CD4-positive, alpha-beta T cell (primary cell): ENCODE measurements at regions of chr3 and their contacts with region 1.

Region 1: DNA sequence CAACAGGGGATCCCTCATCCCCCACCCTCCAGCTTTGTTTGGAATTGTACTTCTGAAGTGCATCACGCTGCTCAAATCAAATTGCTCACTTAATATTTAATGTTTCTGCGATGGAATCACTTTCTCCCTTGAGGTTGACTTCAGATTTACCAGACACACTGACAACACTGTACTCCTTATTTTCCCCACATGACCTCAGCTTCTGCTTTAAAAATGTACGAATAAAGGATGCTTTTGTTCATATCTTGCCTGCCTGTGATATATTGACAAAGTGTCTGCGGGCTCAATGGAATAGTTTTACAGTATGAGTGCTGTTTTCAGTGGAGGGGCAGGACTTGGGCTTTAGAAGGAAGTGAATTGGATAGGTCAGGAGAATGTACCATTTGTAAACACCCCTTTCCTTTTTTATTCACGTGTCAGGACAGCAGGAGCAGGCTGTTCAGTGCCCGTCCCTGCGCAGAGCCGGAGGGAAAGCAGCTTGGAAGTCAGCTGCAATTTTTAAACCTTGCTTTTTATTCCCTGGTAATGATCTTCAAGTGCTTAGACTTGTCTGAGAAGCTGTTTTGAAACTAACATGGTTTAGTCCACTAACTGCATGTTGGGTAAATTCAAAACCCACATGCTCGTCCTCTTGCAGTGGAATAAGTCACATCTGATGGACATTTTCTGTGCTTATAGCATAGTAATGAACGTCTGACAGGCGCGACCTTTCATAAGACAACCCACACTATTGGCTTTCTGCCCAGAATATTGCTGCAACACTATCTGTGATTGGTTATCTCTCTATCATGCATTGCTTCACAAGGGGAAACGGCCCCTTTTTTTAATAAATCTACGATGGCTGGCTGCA is 29.9 kb downstream of the MBNL1 start:
- DNase-seq: peak in 10 of 14 experiments; percentile 22 to 90 (median 54)
- ATAC-seq: peak; percentile 74
- H3K4me3 ChIP-seq: peak overlapping the region; percentile 36
- H3K4me3 Mint-ChIP-seq: peak overlapping the region; percentile 79
- H3K27ac ChIP-seq: peak overlapping the region; percentile 56 to 60
- H3K27ac Mint-ChIP-seq: peak overlapping the region; percentile 92
- H3K4me1 ChIP-seq: peaks cover 55% of the 10 kb centered on the region
- H3K4me1 Mint-ChIP-seq: peaks cover 79% of the 10 kb centered on the region
- H3K27me3 ChIP-seq: no peaks in the 10 kb centered on the region
- H3K27me3 Mint-ChIP-seq: no peaks in the 10 kb centered on the region
- CTCF ChIP-seq: no peak

Region 2: DNA sequence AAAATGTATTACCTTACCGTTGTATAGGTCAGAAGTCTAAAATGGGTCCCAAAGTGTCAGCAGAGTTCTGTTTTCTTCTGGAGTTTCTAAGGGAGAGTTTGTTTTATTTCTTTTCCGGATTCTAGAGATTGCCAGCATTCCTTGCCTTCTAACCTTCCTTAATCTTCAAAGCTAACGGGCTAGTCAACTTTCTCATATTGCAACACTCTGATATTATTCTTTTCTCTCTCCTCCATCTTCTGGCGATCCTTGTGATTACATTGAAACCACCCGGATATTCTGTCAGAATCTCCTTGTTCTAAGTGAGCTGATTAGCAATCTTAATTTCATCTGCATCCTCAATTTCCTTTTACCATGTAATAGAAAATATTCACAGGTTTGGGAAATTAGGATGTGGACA is 601.1 kb before region 1 on chr3:
- CTCF ChIA-PET with region 1: no interaction called
- POLR2A ChIA-PET with region 1: no interaction called
- intact Hi-C with region 1: no loop called
- DNase-seq: no peak
- ATAC-seq: no peak
- H3K4me3 ChIP-seq: no peak overlapping the region
- H3K4me3 Mint-ChIP-seq: no peak overlapping the region
- H3K27ac ChIP-seq: no peak overlapping the region
- H3K27ac Mint-ChIP-seq: no peak overlapping the region
- H3K4me1 ChIP-seq: no peaks in the 10 kb centered on the region
- H3K4me1 Mint-ChIP-seq: no peaks in the 10 kb centered on the region
- H3K27me3 ChIP-seq: no peaks in the 10 kb centered on the region
- H3K27me3 Mint-ChIP-seq: peaks cover 8% of the 10 kb centered on the region
- CTCF ChIP-seq: no peak

Region 3: GRCh38 chr3:151989621-151990020 is 309.0 kb before region 1 on chr3:
- CTCF ChIA-PET with region 1: no interaction called
- POLR2A ChIA-PET with region 1: no interaction called
- intact Hi-C with region 1: no loop called
- DNase-seq: no peak
- ATAC-seq: no peak
- H3K4me3 ChIP-seq: no peak overlapping the region
- H3K4me3 Mint-ChIP-seq: no peak overlapping the region
- H3K27ac ChIP-seq: no peak overlapping the region
- H3K27ac Mint-ChIP-seq: no peak overlapping the region
- H3K4me1 ChIP-seq: no peaks in the 10 kb centered on the region
- H3K4me1 Mint-ChIP-seq: no peaks in the 10 kb centered on the region
- H3K27me3 ChIP-seq: no peaks in the 10 kb centered on the region
- H3K27me3 Mint-ChIP-seq: no peaks in the 10 kb centered on the region
- CTCF ChIP-seq: no peak

Region 4: DNA sequence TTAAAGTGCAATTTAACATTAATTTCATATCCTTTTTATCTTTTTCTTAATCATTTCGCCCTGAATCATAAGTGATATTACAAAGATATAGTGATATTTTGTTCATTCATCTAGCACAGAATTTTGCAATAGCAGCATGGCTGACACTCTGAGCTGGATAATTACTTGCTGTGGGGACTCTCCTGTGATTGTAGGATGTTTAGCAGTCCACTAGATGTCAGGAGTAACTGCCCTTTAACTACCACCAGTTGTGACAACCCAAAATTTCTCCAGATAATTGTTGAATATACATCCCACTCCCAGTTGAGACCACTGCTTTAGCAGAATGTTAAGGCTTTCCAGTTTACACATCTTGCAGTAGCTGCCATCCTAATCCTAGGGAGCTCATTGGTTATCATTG is 226.7 kb before region 1 on chr3:
- CTCF ChIA-PET with region 1: interaction called, 4 read pairs
- POLR2A ChIA-PET with region 1: no interaction called
- intact Hi-C with region 1: loop called in 1 of 2 experiments (anchors 10 kb)
- DNase-seq: peak in 4 of 14 experiments; percentile 2 to 65 (median 56)
- ATAC-seq: peak; percentile 86
- H3K4me3 ChIP-seq: no peak overlapping the region
- H3K4me3 Mint-ChIP-seq: no peak overlapping the region
- H3K27ac ChIP-seq: no peak overlapping the region
- H3K27ac Mint-ChIP-seq: no peak overlapping the region
- H3K4me1 ChIP-seq: no peaks in the 10 kb centered on the region
- H3K4me1 Mint-ChIP-seq: peaks cover 5% of the 10 kb centered on the region
- H3K27me3 ChIP-seq: no peaks in the 10 kb centered on the region
- H3K27me3 Mint-ChIP-seq: no peaks in the 10 kb centered on the region
- CTCF ChIP-seq: peak; percentile 45

Region 5: GRCh38 chr3:152193673-152194267 is 104.8 kb before region 1 on chr3:
- CTCF ChIA-PET with region 1: no interaction called
- POLR2A ChIA-PET with region 1: no interaction called
- intact Hi-C with region 1: loop called in 1 of 2 experiments (anchors 2 kb)
- DNase-seq: peak in 6 of 14 experiments; percentile 6 to 84 (median 62)
- ATAC-seq: peak; percentile 63
- H3K4me3 ChIP-seq: peak overlapping the region; percentile 50
- H3K4me3 Mint-ChIP-seq: peak overlapping the region; percentile 90
- H3K27ac ChIP-seq: peak overlapping the region; percentile 42 to 48
- H3K27ac Mint-ChIP-seq: peak overlapping the region; percentile 96
- H3K4me1 ChIP-seq: peaks cover 40% of the 10 kb centered on the region
- H3K4me1 Mint-ChIP-seq: peaks cover 87% of the 10 kb centered on the region
- H3K27me3 ChIP-seq: no peaks in the 10 kb centered on the region
- H3K27me3 Mint-ChIP-seq: no peaks in the 10 kb centered on the region
- CTCF ChIP-seq: no peak

Region 6: GRCh38 chr3:152258448-152259393 is 39.9 kb before region 1 on chr3:
- CTCF ChIA-PET with region 1: interaction called, 4 read pairs
- POLR2A ChIA-PET with region 1: interaction called, 5 read pairs
- intact Hi-C with region 1: loop called in 1 of 2 experiments (anchors 5 kb)
- DNase-seq: peak in 12 of 14 experiments; percentile 35 to 90 (median 58)
- ATAC-seq: peak; percentile 65
- H3K4me3 ChIP-seq: peak overlapping the region; percentile 19
- H3K4me3 Mint-ChIP-seq: peak overlapping the region; percentile 86
- H3K27ac ChIP-seq: peak overlapping the region; percentile 81 to 86
- H3K27ac Mint-ChIP-seq: peak overlapping the region; percentile 96
- H3K4me1 ChIP-seq: peaks cover 57% of the 10 kb centered on the region
- H3K4me1 Mint-ChIP-seq: peaks cover 96% of the 10 kb centered on the region
- H3K27me3 ChIP-seq: no peaks in the 10 kb centered on the region
- H3K27me3 Mint-ChIP-seq: no peaks in the 10 kb centered on the region
- CTCF ChIP-seq: no peak

Region 7: DNA sequence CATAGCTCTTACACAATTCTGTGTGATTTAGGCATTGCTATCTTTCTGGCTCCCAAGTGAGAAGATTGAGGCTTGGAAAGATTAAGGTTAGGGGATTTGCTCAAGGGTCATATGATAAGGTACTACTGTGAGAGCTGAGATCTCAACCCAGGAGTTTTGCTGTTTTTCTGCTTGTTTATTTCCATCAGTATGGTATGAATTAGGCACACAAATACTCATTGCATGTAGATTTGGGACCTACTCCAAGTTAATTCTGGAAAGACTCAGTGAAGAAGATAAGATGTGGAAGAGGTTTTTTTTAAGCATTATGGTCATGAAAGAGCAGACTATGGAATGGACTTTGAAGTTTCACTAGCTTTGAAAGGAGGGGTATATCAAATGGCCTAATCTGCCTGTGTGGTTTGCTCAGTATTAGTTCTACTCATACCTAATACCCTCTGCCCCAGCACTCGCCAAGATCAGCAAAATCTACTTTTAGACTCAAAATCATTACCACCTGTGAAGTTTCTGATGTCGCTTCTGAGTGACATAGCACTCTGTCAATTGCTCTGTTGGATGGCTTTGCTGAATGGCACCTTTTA is 17.4 kb before region 1 on chr3:
- CTCF ChIA-PET with region 1: interaction called, 5 read pairs
- POLR2A ChIA-PET with region 1: interaction called, 10 read pairs
- intact Hi-C with region 1: loop called (anchors 2 kb)
- DNase-seq: no peak
- ATAC-seq: no peak
- H3K4me3 ChIP-seq: peak overlapping the region; percentile 34
- H3K4me3 Mint-ChIP-seq: peak overlapping the region; percentile 79
- H3K27ac ChIP-seq: peak overlapping the region; percentile 2 to 53
- H3K27ac Mint-ChIP-seq: peak overlapping the region; percentile 82
- H3K4me1 ChIP-seq: peaks cover 31% of the 10 kb centered on the region
- H3K4me1 Mint-ChIP-seq: peaks cover 86% of the 10 kb centered on the region
- H3K27me3 ChIP-seq: no peaks in the 10 kb centered on the region
- H3K27me3 Mint-ChIP-seq: no peaks in the 10 kb centered on the region
- CTCF ChIP-seq: no peak

Region 8: DNA sequence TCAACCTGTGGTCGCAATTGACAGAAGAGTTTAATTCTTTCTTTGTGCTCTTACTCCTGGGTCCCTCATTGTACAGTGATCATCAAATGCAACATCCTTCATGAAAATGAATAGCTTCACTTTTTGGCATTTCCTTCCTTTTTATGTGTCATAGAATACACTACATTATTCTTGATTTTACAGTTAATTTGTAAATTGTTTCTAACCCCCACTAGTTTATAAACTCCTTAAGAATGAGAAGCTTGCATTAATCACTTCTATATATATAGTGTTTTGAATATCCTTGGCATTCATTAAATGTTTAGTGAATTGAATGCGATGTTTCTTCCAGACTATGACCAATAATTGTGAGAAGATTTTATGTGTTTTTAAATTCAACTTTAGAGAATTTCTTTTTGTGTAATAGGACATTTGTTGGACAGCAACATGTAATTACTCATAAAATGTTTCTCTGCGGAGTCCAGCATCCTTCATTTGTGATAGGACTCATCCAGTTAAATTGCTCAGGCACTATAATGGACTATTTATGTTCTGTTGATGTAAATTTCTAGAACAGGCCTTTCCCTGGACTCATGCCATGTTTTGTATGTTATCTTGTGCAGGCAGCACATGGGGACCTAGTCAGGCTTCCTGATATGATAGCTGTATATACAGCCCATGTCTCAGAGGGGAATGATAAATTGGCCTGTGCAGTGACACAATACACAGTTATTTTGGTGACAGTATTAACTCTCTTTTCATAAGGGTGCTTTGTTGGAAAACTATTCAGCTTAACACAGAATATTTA is 21.4 kb after region 1 on chr3:
- CTCF ChIA-PET with region 1: no interaction called
- POLR2A ChIA-PET with region 1: interaction called, 16 read pairs
- intact Hi-C with region 1: no loop called
- DNase-seq: peak in 1 of 14 experiments; percentile 32
- ATAC-seq: peak; percentile 13
- H3K4me3 ChIP-seq: no peak overlapping the region
- H3K4me3 Mint-ChIP-seq: peak overlapping the region; percentile 40
- H3K27ac ChIP-seq: peak overlapping the region in 1 of 2 donors; percentile 4
- H3K27ac Mint-ChIP-seq: peak overlapping the region; percentile 91
- H3K4me1 ChIP-seq: peaks cover 14% of the 10 kb centered on the region
- H3K4me1 Mint-ChIP-seq: peaks cover 93% of the 10 kb centered on the region
- H3K27me3 ChIP-seq: no peaks in the 10 kb centered on the region
- H3K27me3 Mint-ChIP-seq: no peaks in the 10 kb centered on the region
- CTCF ChIP-seq: no peak

Region 9: DNA sequence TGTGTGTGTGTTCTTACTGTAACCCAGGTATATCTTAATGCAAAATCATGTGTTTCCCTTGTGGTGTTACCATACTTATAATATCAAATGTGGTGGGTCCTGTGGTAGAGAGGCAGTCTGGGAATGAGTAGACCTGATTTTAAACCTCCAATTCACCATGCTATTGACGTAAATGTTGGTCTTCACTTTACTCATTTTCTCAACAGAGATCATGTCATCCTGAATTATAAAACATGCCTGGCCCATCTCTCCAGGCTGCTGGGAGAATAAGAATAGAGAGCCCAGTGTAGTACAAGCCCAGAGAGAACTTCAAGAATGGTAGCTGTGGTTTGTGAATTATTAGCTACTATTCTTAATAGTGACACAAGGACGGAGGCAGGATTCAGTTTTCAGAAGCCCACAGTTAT is 58.3 kb after region 1 on chr3:
- CTCF ChIA-PET with region 1: no interaction called
- POLR2A ChIA-PET with region 1: no interaction called
- intact Hi-C with region 1: loop called in 1 of 2 experiments (anchors 2 kb)
- DNase-seq: peak in 1 of 14 experiments; percentile 35
- ATAC-seq: peak; percentile 50
- H3K4me3 ChIP-seq: no peak overlapping the region
- H3K4me3 Mint-ChIP-seq: peak overlapping the region; percentile 18
- H3K27ac ChIP-seq: no peak overlapping the region
- H3K27ac Mint-ChIP-seq: peak overlapping the region; percentile 45
- H3K4me1 ChIP-seq: peaks cover 30% of the 10 kb centered on the region
- H3K4me1 Mint-ChIP-seq: peaks cover 85% of the 10 kb centered on the region
- H3K27me3 ChIP-seq: no peaks in the 10 kb centered on the region
- H3K27me3 Mint-ChIP-seq: no peaks in the 10 kb centered on the region
- CTCF ChIP-seq: no peak

Region 10: GRCh38 chr3:152909180-152909883 is 610.7 kb after region 1 on chr3:
- CTCF ChIA-PET with region 1: no interaction called
- POLR2A ChIA-PET with region 1: no interaction called
- intact Hi-C with region 1: no loop called
- DNase-seq: no peak
- ATAC-seq: no peak
- H3K4me3 ChIP-seq: no peak overlapping the region
- H3K4me3 Mint-ChIP-seq: no peak overlapping the region
- H3K27ac ChIP-seq: no peak overlapping the region
- H3K27ac Mint-ChIP-seq: no peak overlapping the region
- H3K4me1 ChIP-seq: no peaks in the 10 kb centered on the region
- H3K4me1 Mint-ChIP-seq: no peaks in the 10 kb centered on the region
- H3K27me3 ChIP-seq: no peaks in the 10 kb centered on the region
- H3K27me3 Mint-ChIP-seq: no peaks in the 10 kb centered on the region
- CTCF ChIP-seq: no peak

Region 11: GRCh38 chr3:153394017-153394416 is 1095.4 kb after region 1 on chr3:
- CTCF ChIA-PET with region 1: no interaction called
- POLR2A ChIA-PET with region 1: no interaction called
- intact Hi-C with region 1: no loop called
- DNase-seq: no peak
- ATAC-seq: no peak
- H3K4me3 ChIP-seq: no peak overlapping the region
- H3K4me3 Mint-ChIP-seq: no peak overlapping the region
- H3K27ac ChIP-seq: no peak overlapping the region
- H3K27ac Mint-ChIP-seq: no peak overlapping the region
- H3K4me1 ChIP-seq: no peaks in the 10 kb centered on the region
- H3K4me1 Mint-ChIP-seq: peaks cover 6% of the 10 kb centered on the region
- H3K27me3 ChIP-seq: no peaks in the 10 kb centered on the region
- H3K27me3 Mint-ChIP-seq: no peaks in the 10 kb centered on the region
- CTCF ChIP-seq: no peak